ENCODE measurements at regions of chr5 and their contacts with region 1.

Region 1: DNA sequence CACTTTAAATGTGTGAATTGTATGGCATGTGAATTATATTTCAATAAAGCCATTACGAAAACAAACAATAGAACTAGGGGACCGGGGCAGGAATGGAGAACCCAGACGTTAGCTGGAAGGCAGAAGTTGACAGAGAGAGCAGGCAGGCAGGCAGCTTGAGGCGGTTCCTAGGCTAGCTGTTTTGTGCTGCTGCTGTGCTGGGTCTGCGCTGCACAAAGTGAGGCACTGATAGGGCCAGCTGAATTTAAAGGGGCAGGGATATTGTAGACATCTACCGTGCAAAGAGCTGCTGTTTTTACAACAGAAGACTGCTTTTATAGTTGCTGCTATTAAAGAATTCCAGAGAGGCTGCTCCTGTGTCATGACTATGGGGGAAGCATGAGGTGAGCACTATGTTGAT is 21.6 kb upstream of the MIER3 start:
- DNase-seq: no peak
- ATAC-seq: no peak
- H3K4me3 ChIP-seq: no peak overlapping the region
- H3K27ac ChIP-seq: no peak overlapping the region
- H3K4me1 ChIP-seq: no peaks in the 10 kb centered on the region
- H3K27me3 ChIP-seq: peaks cover 29% of the 10 kb centered on the region
- CTCF ChIP-seq: no peak
- POLR2A ChIP-seq: no peak
- RAD21 ChIP-seq: no peak

Region 2: GRCh38 chr5:56918054-56918453 is 55.4 kb before region 1 on chr5:
- CTCF ChIA-PET with region 1: no interaction called
- POLR2A ChIA-PET with region 1: no interaction called
- dilution Hi-C with region 1: no loop called
- in situ Hi-C with region 1: no loop called
- intact Hi-C with region 1: no loop called
- DNase-seq: no peak
- ATAC-seq: no peak; the same call in 1 of the 2 replicates
- H3K4me3 ChIP-seq: no peak overlapping the region
- H3K27ac ChIP-seq: no peak overlapping the region
- H3K4me1 ChIP-seq: no peaks in the 10 kb centered on the region
- H3K27me3 ChIP-seq: no peaks in the 10 kb centered on the region
- CTCF ChIP-seq: no peak
- POLR2A ChIP-seq: no peak
- RAD21 ChIP-seq: no peak

Region 3: DNA sequence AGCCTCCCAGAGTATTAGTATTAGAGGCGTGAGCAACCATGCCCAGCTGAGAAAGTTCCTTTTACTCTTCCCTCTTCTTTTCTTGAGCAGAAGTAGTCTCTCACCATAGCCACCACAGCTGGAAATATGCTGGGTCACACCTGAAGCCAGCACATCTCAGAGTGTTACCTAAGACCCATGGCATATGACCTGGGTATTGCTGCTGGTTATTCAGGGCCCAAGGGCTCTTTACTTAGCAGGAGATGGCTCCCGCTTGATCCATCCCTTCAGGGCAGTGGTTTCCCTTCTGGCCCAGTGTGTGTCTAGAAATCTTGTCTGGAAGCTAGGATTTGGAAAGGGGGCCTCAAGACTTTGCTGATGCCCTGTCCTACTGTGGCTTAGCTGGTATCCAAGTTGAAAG is 177.2 kb after region 1 on chr5:
- CTCF ChIA-PET with region 1: no interaction called
- POLR2A ChIA-PET with region 1: no interaction called
- dilution Hi-C with region 1: no loop called
- in situ Hi-C with region 1: no loop called
- intact Hi-C with region 1: no loop called
- DNase-seq: no peak
- ATAC-seq: no peak
- H3K4me3 ChIP-seq: no peak overlapping the region
- H3K27ac ChIP-seq: no peak overlapping the region
- H3K4me1 ChIP-seq: no peaks in the 10 kb centered on the region
- H3K27me3 ChIP-seq: no peaks in the 10 kb centered on the region
- CTCF ChIP-seq: no peak
- POLR2A ChIP-seq: no peak
- RAD21 ChIP-seq: no peak

Region 4: GRCh38 chr5:57243286-57244137 is 270.0 kb after region 1 on chr5:
- CTCF ChIA-PET with region 1: no interaction called
- POLR2A ChIA-PET with region 1: interaction called, 17 read pairs
- dilution Hi-C with region 1: no loop called
- in situ Hi-C with region 1: no loop called
- intact Hi-C with region 1: no loop called
- DNase-seq: no peak
- ATAC-seq: no peak
- H3K4me3 ChIP-seq: no peak overlapping the region
- H3K27ac ChIP-seq: no peak overlapping the region
- H3K4me1 ChIP-seq: no peaks in the 10 kb centered on the region
- H3K27me3 ChIP-seq: no peaks in the 10 kb centered on the region
- CTCF ChIP-seq: no peak
- POLR2A ChIP-seq: no peak
- RAD21 ChIP-seq: no peak